ENCODE measurements at regions of chr11 and their contacts with region 1.

Region 1: GRCh38 chr11:47176328-47177228 is at the start of gene ARFGAP2:
- DNase-seq: peak; percentile 98
- ATAC-seq: peak; percentile 90
- H3K4me3 ChIP-seq: peak within 1 kb of the TSS; percentile 78 to 98 (median 96)
- H3K4me3 Mint-ChIP-seq: peak within 1 kb of the TSS; percentile 100
- H3K27ac ChIP-seq: peak within 1 kb of the TSS; percentile 92
- H3K27ac Mint-ChIP-seq: peak within 1 kb of the TSS; percentile 100
- H3K4me1 ChIP-seq: peaks cover 17 to 28% of the 10 kb centered on the region in 2 donors
- H3K4me1 Mint-ChIP-seq: peaks cover 33% of the 10 kb centered on the region
- H3K27me3 ChIP-seq: no peaks in the 10 kb centered on the region
- H3K27me3 Mint-ChIP-seq: no peaks in the 10 kb centered on the region
- CTCF ChIP-seq: no peak
- total RNA-seq, gene ARFGAP2: 200 and 214 TPM in 2 replicates

Region 2: DNA sequence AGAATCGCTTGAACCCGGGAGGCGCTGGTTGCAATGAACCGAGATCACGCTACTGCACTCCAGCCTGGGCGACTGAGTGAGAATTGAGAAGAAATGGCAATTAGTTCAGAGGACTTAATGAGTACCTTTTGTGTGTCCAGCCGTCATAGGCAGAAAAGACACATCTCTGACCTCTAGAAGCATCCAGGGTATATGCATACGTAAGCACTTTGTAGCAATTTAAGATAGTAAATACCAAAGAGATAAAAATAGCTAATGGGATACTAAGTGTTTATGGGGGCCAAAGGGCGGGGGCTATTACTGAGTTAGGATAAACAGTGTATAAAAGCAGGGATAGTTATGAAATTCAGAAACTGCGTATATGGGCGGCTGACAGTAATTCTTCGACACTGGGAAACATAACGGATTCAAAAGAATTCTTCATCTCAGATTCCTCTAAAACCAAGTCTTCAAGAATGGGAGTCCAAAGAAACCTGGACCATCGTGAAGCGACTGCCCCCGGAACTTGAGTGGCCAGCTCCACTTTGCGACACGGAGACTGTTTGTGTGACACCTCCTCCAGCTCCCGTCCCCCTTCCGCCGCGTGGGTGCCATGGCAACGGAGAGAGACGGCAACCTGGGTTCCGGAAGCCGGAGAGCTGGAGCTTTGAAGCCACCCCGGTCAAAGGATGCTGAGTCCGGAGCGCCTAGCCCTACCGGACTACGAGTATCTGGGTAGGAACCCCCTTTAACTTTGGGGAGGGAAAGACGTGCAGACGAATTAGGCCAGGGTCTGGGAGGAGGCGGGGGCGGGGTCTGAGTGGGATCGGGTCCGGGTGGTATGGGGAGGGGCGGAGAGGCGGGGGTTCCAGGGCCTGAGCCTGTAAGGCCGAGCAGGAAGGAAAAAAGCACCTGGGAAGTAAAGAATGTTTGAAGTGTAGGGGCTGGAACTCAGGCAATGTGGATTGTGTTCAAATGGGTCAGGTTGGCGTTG is 240.2 kb before region 1 on chr11 and contains the start of gene CSTPP1:
- CTCF ChIA-PET with region 1: no interaction called
- POLR2A ChIA-PET with region 1: no interaction called
- intact Hi-C with region 1: loop called (anchors 1 kb)
- DNase-seq: peak; percentile 93
- ATAC-seq: peak; percentile 90
- H3K4me3 ChIP-seq: peak within 1 kb of the TSS; percentile 38 to 67 (median 64)
- H3K4me3 Mint-ChIP-seq: peak within 1 kb of the TSS; percentile 90
- H3K27ac ChIP-seq: peak within 1 kb of the TSS; percentile 30 to 69
- H3K27ac Mint-ChIP-seq: peak within 1 kb of the TSS; percentile 85
- H3K4me1 ChIP-seq: peaks cover 5 to 12% of the 10 kb centered on the region in 2 donors
- H3K4me1 Mint-ChIP-seq: peaks cover 18% of the 10 kb centered on the region
- H3K27me3 ChIP-seq: peaks cover 0 to 5% (median 0%) of the 10 kb centered on the region in 4 experiments
- H3K27me3 Mint-ChIP-seq: peaks cover 13% of the 10 kb centered on the region
- CTCF ChIP-seq: no peak
- total RNA-seq, gene CSTPP1: 27.4 and 29.0 TPM in 2 replicates

Region 3: GRCh38 chr11:47259178-47259977 is 82.8 kb after region 1 on chr11:
- CTCF ChIA-PET with region 1: interaction called, 21 read pairs
- POLR2A ChIA-PET with region 1: no interaction called
- intact Hi-C with region 1: no loop called
- DNase-seq: peak; percentile 38
- ATAC-seq: peak; percentile 72
- H3K4me3 ChIP-seq: no peak overlapping the region
- H3K4me3 Mint-ChIP-seq: no peak overlapping the region
- H3K27ac ChIP-seq: no peak overlapping the region
- H3K27ac Mint-ChIP-seq: no peak overlapping the region
- H3K4me1 ChIP-seq: no peaks in the 10 kb centered on the region
- H3K4me1 Mint-ChIP-seq: peaks cover 2% of the 10 kb centered on the region
- H3K27me3 ChIP-seq: no peaks in the 10 kb centered on the region
- H3K27me3 Mint-ChIP-seq: no peaks in the 10 kb centered on the region
- CTCF ChIP-seq: peak; percentile 42

Region 4: GRCh38 chr11:47399860-47400767 is 223.5 kb after region 1 on chr11:
- CTCF ChIA-PET with region 1: no interaction called
- POLR2A ChIA-PET with region 1: no interaction called
- intact Hi-C with region 1: loop called (anchors 2 kb)
- DNase-seq: peak; percentile 71
- ATAC-seq: peak; percentile 82
- H3K4me3 ChIP-seq: peak overlapping the region; percentile 71 to 85 (median 81)
- H3K4me3 Mint-ChIP-seq: peak overlapping the region; percentile 91
- H3K27ac ChIP-seq: peak overlapping the region; percentile 85
- H3K27ac Mint-ChIP-seq: peak overlapping the region; percentile 96
- H3K4me1 ChIP-seq: peaks cover 45 to 53% of the 10 kb centered on the region in 2 donors
- H3K4me1 Mint-ChIP-seq: peaks cover 45% of the 10 kb centered on the region
- H3K27me3 ChIP-seq: no peaks in the 10 kb centered on the region
- H3K27me3 Mint-ChIP-seq: no peaks in the 10 kb centered on the region
- CTCF ChIP-seq: no peak

Region 5: DNA sequence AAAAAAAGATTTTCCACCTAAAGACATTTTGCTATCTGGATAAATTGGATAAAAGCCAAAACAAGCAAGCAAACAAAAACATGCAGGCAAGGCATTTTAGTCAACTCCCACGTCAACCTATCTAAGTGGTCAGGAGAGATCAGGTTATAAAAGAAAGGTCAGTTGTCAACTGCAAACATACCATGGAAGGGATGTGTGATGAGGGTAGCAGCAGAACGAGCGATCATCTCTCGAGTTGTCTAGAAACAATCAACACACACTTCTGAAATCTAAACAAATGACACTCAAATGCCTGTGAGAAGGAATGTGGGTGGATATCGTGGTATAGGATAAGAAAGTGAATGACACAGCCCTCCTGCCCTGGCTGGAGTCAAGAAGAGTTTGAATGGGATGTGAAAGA is 454.9 kb after region 1 on chr11:
- CTCF ChIA-PET with region 1: no interaction called
- POLR2A ChIA-PET with region 1: no interaction called
- intact Hi-C with region 1: no loop called
- DNase-seq: no peak
- ATAC-seq: no peak
- H3K4me3 ChIP-seq: no peak overlapping the region
- H3K4me3 Mint-ChIP-seq: no peak overlapping the region
- H3K27ac ChIP-seq: no peak overlapping the region
- H3K27ac Mint-ChIP-seq: no peak overlapping the region
- H3K4me1 ChIP-seq: no peaks in the 10 kb centered on the region
- H3K4me1 Mint-ChIP-seq: no peaks in the 10 kb centered on the region
- H3K27me3 ChIP-seq: no peaks in the 10 kb centered on the region
- H3K27me3 Mint-ChIP-seq: no peaks in the 10 kb centered on the region
- CTCF ChIP-seq: no peak

Region 6: DNA sequence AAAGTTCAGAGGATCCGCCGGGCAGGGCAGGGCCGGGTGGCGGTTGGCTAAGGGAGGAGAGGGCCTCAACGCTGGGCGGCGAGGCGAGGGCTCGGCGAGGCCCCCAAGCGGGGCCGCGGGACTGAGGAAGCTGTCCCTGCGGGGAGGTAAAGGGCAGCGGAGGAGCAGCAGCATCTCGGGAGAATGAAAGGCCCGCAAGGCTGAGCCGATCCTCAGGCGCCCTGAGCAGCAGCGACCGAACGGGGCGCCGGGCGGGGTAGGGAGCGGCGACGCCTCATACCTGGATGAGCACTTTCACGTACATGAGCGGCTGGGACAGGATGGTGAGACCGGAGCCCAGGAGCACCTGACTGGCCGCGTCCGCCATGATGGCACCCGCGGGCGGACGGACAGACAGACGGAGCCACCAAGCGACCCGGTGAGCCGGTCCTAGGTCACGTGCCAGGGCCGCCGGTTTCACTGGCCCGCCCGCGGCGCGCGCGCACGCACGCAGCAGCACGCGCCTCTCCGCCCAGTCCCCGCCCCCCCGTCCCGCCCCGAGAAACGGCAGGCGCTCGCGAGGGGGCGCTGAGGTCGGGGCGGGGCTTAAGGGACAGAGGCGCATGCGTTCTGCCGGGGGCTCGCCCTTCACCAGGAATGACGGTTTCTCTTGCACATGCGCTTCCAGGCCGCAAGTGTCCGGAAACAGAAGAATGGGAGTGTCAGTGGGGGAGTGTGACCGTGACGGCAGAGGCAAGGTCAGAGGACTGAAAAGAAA is 465.7 kb after region 1 on chr11 and contains the start of gene MTCH2:
- CTCF ChIA-PET with region 1: no interaction called
- POLR2A ChIA-PET with region 1: no interaction called
- intact Hi-C with region 1: loop called (anchors 2 kb)
- DNase-seq: peak; percentile 99
- ATAC-seq: peak; percentile 94
- H3K4me3 ChIP-seq: peak within 1 kb of the TSS; percentile 79 to 86 (median 79)
- H3K4me3 Mint-ChIP-seq: peak within 1 kb of the TSS; percentile 93
- H3K27ac ChIP-seq: peak within 1 kb of the TSS; percentile 92
- H3K27ac Mint-ChIP-seq: peak within 1 kb of the TSS; percentile 96
- H3K4me1 ChIP-seq: peaks cover 13 to 21% of the 10 kb centered on the region in 2 donors
- H3K4me1 Mint-ChIP-seq: peaks cover 23% of the 10 kb centered on the region
- H3K27me3 ChIP-seq: no peaks in the 10 kb centered on the region
- H3K27me3 Mint-ChIP-seq: no peaks in the 10 kb centered on the region
- CTCF ChIP-seq: peak; percentile 29
- total RNA-seq, gene MTCH2: 26.9 and 30.9 TPM in 2 replicates

Region 7: DNA sequence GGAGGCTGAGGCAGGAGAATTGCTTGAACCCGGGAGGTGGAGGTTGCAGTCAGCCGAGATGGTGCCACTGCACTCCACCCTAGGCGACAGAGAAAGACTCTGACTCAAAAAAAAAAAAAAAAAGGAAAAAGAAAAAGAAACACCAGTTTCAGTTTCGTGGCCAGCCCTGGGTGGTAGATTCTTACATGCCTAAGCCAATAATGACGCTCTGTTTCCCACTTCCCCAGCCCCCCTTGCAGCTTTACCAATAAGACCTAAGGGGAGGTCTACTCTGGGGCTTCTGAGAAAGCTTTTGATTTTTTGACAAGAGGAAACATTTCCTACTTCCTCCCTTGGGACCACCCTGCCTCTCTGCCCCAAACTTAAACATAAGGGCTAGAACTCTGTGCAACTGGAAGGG is 773.8 kb after region 1 on chr11:
- CTCF ChIA-PET with region 1: no interaction called
- POLR2A ChIA-PET with region 1: no interaction called
- intact Hi-C with region 1: loop called (anchors 5 kb)
- DNase-seq: peak; percentile 91
- ATAC-seq: peak; percentile 98
- H3K4me3 ChIP-seq: peak overlapping the region in 2 of 5 experiments; percentile 19 to 49
- H3K4me3 Mint-ChIP-seq: peak overlapping the region; percentile 48
- H3K27ac ChIP-seq: peak overlapping the region; percentile 58 to 66
- H3K27ac Mint-ChIP-seq: peak overlapping the region; percentile 86
- H3K4me1 ChIP-seq: peaks cover 34 to 42% of the 10 kb centered on the region in 2 donors
- H3K4me1 Mint-ChIP-seq: peaks cover 48% of the 10 kb centered on the region
- H3K27me3 ChIP-seq: no peaks in the 10 kb centered on the region
- H3K27me3 Mint-ChIP-seq: no peaks in the 10 kb centered on the region
- CTCF ChIP-seq: no peak

Measured in B cell (primary cell).